PC-3 (cell line): ENCODE measurements at regions of chr12 and their contacts with region 1.

Region 1: GRCh38 chr12:12376646-12377448 is 20.0 kb downstream of the BORCS5 start:
- DNase-seq: peak; percentile 81
- ATAC-seq: peak; percentile 66; the same call in 1 of the 2 replicates
- H3K4me3 ChIP-seq: no peak overlapping the region
- H3K27ac ChIP-seq: peak overlapping the region; percentile 23
- H3K4me1 ChIP-seq: no peaks in the 10 kb centered on the region
- H3K27me3 ChIP-seq: no peaks in the 10 kb centered on the region
- CTCF ChIP-seq: peak; percentile 79

Region 2: GRCh38 chr12:12315838-12316237 is 61.0 kb before region 1 on chr12:
- CTCF ChIA-PET with region 1: no interaction called
- POLR2A ChIA-PET with region 1: no interaction called
- intact Hi-C with region 1: no loop called
- DNase-seq: no peak
- ATAC-seq: no peak
- H3K4me3 ChIP-seq: no peak overlapping the region
- H3K27ac ChIP-seq: no peak overlapping the region
- H3K4me1 ChIP-seq: no peaks in the 10 kb centered on the region
- H3K27me3 ChIP-seq: no peaks in the 10 kb centered on the region
- CTCF ChIP-seq: no peak

Region 3: DNA sequence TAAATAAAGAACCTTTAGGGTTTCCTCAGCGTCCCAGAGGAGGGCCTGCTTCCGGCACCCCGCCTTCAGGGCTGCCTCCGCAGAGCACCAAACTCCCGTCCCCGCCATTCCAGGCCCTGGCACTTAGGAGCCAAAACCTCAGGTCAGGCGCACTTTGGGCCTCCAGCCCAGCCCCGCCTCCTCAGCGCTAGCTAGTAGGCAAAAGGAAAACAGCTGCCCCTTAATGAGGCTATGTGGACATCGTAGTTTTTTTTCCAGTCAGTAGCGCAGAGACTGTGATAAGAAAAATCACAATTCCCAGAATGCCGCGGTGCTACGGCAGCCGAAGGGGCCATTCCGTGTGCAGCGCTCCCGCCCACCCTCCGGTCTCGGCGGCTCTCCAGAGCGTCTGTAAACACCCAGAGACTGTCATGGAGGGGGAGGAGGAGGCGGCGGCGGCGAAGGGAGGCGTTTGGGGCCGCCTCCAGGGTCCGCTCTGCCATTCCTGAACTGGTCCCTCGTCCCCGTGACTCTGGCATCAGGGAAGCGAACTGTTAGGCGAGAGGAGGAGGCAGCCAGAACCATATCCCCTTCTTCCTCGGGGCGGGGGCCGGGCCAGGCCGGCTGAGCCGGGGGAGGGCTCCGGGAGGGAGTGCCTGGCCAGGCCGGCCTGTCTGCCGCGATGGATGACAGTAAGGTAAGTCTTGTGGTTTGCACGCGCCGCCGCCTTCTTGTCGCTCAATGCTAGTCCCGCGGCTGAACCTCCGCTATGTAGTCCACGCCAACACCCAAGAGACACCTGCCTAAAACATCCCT is 234.9 kb after region 1 on chr12 and contains the start of gene CREBL2:
- CTCF ChIA-PET with region 1: no interaction called
- POLR2A ChIA-PET with region 1: no interaction called
- intact Hi-C with region 1: loop called (anchors 1 kb)
- DNase-seq: peak; percentile 87
- ATAC-seq: peak; percentile 68
- H3K4me3 ChIP-seq: peak within 1 kb of the TSS; percentile 86
- H3K27ac ChIP-seq: peak within 1 kb of the TSS; percentile 95
- H3K4me1 ChIP-seq: peaks cover 26% of the 10 kb centered on the region
- H3K27me3 ChIP-seq: no peaks in the 10 kb centered on the region
- CTCF ChIP-seq: no peak
- total RNA-seq, gene CREBL2: 11.7 and 14.2 TPM in 2 replicates

Region 4: DNA sequence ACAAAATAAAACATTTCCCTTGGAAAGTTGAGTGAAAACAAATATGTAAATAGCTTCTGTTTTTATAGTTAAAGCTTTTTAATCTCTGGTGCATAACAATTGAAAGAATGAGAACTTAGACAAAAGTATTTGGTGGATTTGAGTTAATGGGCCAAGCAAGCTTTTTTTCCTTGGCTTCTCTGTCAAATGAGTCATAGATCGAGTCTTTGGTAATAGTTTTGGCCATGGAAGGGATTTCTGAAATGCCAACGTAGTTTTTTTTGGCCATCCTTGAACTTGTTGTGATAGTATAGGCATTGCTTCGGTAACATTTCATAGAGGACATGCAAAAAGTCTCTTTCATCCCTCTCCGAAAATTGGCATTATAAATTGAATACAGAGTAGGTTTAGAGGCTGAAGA is 284.2 kb after region 1 on chr12:
- CTCF ChIA-PET with region 1: interaction called, 3 read pairs
- POLR2A ChIA-PET with region 1: no interaction called
- intact Hi-C with region 1: loop called (anchors 1 kb)
- DNase-seq: peak; percentile 36
- ATAC-seq: no peak
- H3K4me3 ChIP-seq: no peak overlapping the region
- H3K27ac ChIP-seq: no peak overlapping the region
- H3K4me1 ChIP-seq: no peaks in the 10 kb centered on the region
- H3K27me3 ChIP-seq: no peaks in the 10 kb centered on the region
- CTCF ChIP-seq: no peak